HepG2 (cell line): ENCODE measurements at regions of chr10 and their contacts with region 1.

Region 1: GRCh38 chr10:62095181-62096071 is 173.2 kb downstream of the RTKN2 start:
- DNase-seq: peak; percentile 94
- ATAC-seq: peak; percentile 36
- H3K4me3 ChIP-seq: peak overlapping the region in 1 of 3 experiments; percentile 21; a peak in 1 of 6 replicates
- H3K27ac ChIP-seq: peak overlapping the region; percentile 95
- H3K4me1 ChIP-seq: peaks cover 83% of the 10 kb centered on the region
- H3K27me3 ChIP-seq: no peaks in the 10 kb centered on the region
- CTCF ChIP-seq: no peak
- EP300 ChIP-seq: peak; percentile 49 to 93; a peak in 3 of 4 replicates
- POLR2A ChIP-seq: no peak; a peak in 1 of 4 replicates
- RAD21 ChIP-seq: no peak

Region 2: GRCh38 chr10:61903221-61903927 is 192.1 kb before region 1 on chr10:
- CTCF ChIA-PET with region 1: no interaction called
- POLR2A ChIA-PET with region 1: interaction called, 6 read pairs
- in situ Hi-C with region 1: loop called (anchors 5 kb)
- intact Hi-C with region 1: loop called (anchors 2 kb)
- DNase-seq: peak; percentile 38
- ATAC-seq: peak; percentile 89
- H3K4me3 ChIP-seq: peak overlapping the region; percentile 93 to 96 (median 94)
- H3K27ac ChIP-seq: peak overlapping the region; percentile 94
- H3K4me1 ChIP-seq: peaks cover 51% of the 10 kb centered on the region
- H3K27me3 ChIP-seq: no peaks in the 10 kb centered on the region; a peak in 1 of 5 replicates
- CTCF ChIP-seq: peak; percentile 36; the same call in 1 of the 2 replicates
- EP300 ChIP-seq: no peak
- POLR2A ChIP-seq: peak; percentile 39 to 47; a peak in 2 of 4 replicates
- RAD21 ChIP-seq: peak; percentile 45; the same call in 1 of the 2 replicates

Region 3: DNA sequence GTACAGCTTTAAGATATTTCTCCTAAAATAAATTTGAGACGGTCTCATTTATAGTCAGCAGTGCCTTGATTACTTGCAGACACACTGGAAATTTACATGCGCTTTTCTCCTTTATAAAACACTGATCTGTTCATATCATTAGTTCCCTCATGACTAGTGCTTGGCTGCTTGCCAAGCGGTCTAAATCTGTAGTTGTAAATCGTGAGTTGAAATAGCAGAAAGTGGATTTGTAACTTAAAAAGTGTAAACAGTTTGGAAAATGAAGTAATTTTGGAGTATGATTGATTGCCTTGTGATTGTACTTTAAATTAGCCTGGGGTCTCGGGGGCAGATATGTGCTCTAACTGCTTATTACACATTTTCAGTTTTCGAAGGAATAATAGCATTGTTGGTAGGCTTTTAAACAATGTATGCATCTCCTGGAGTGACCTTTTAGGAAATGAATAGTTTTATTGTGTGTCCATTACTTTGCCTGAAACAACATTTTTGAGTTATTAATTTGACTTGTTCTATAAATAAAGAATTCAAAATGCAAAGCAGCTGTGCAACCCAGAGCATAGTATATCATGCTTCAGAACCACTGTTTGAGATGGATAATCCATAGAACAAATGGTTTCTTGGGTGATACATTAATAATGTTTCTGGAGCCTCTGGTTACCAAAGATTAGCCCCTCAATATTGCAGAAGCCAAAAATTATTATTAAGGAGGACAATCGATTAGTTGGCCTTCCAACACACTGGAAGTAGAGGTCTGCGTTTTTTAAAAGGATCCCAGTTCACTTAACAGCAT is 120.6 kb before region 1 on chr10:
- CTCF ChIA-PET with region 1: no interaction called
- POLR2A ChIA-PET with region 1: no interaction called
- in situ Hi-C with region 1: no loop called
- intact Hi-C with region 1: loop called (anchors 1 kb)
- DNase-seq: no peak
- ATAC-seq: no peak
- H3K4me3 ChIP-seq: no peak overlapping the region
- H3K27ac ChIP-seq: no peak overlapping the region
- H3K4me1 ChIP-seq: peaks cover 29% of the 10 kb centered on the region
- H3K27me3 ChIP-seq: no peaks in the 10 kb centered on the region
- CTCF ChIP-seq: no peak
- EP300 ChIP-seq: no peak
- POLR2A ChIP-seq: no peak
- RAD21 ChIP-seq: no peak

Region 4: GRCh38 chr10:62082729-62083411 is 12.6 kb before region 1 on chr10:
- CTCF ChIA-PET with region 1: no interaction called
- POLR2A ChIA-PET with region 1: interaction called, 14 read pairs
- in situ Hi-C with region 1: no loop called
- intact Hi-C with region 1: no loop called
- DNase-seq: peak; percentile 56
- ATAC-seq: peak; percentile 57
- H3K4me3 ChIP-seq: no peak overlapping the region
- H3K27ac ChIP-seq: peak overlapping the region; percentile 74
- H3K4me1 ChIP-seq: peaks cover 51% of the 10 kb centered on the region
- H3K27me3 ChIP-seq: no peaks in the 10 kb centered on the region
- CTCF ChIP-seq: no peak
- EP300 ChIP-seq: peak in 1 of 2 experiments; percentile 2; a peak in 1 of 4 replicates
- POLR2A ChIP-seq: no peak
- RAD21 ChIP-seq: no peak

Region 5: GRCh38 chr10:62244780-62245467 is 149.5 kb after region 1 on chr10:
- CTCF ChIA-PET with region 1: no interaction called
- POLR2A ChIA-PET with region 1: interaction called, 6 read pairs
- in situ Hi-C with region 1: loop called (anchors 10 kb)
- intact Hi-C with region 1: loop called (anchors 2 kb)
- DNase-seq: peak; percentile 67
- ATAC-seq: peak; percentile 64
- H3K4me3 ChIP-seq: no peak overlapping the region
- H3K27ac ChIP-seq: no peak overlapping the region
- H3K4me1 ChIP-seq: peaks cover 12% of the 10 kb centered on the region
- H3K27me3 ChIP-seq: no peaks in the 10 kb centered on the region
- CTCF ChIP-seq: peak; percentile 84
- EP300 ChIP-seq: no peak; a peak in 1 of 4 replicates
- POLR2A ChIP-seq: no peak
- RAD21 ChIP-seq: peak; percentile 60; the same call in 1 of the 2 replicates

Region 6: DNA sequence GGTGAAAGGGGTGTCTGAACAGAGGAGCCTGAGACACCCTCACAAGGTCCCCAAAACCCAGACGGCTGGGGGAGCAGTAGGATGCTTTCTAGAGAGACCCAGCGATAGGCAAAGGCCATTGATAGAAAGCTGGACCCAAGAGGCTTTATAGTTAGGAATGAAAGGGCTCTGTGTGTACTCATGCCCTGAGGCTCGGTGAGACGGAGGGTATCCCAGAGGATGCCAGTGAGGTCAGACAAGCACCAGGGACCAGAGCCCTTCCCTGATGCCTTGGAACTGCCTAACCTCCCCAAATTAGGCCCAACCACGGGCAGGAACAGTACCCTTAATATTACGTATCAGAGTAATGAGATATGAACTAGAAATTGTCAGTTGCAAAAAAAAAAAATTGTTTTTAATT is 221.8 kb after region 1 on chr10:
- CTCF ChIA-PET with region 1: no interaction called
- POLR2A ChIA-PET with region 1: no interaction called
- in situ Hi-C with region 1: no loop called
- intact Hi-C with region 1: no loop called
- DNase-seq: no peak
- ATAC-seq: no peak
- H3K4me3 ChIP-seq: no peak overlapping the region
- H3K27ac ChIP-seq: no peak overlapping the region
- H3K4me1 ChIP-seq: no peaks in the 10 kb centered on the region
- H3K27me3 ChIP-seq: peaks cover 0 to 1% of the 10 kb centered on the region in 2 experiments; a peak in 1 of 5 replicates
- CTCF ChIP-seq: no peak
- EP300 ChIP-seq: no peak
- POLR2A ChIP-seq: no peak
- RAD21 ChIP-seq: no peak